Prostate gland (tissue), 2 donors: ENCODE measurements at regions of chr9 and their contacts with region 1.

Region 1: DNA sequence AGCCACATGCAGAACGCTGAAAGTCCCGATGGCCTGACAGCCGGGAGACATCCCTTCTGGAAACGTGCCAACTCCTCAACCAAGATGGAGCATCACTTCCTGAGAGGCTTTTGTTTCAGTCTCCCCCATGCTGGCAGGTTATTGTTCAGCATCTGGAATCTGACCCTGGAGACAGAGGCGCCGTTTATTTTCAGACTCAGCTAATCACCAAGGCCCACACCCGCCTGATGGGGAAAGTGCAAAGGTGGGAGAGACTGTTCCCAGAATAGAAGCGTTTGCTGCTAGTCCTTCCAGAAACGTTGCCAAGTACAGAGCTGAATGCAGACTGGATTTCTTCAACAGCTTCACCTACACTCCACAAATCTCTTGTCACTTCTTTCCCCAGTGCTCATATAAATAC is 41.8 kb upstream of the S1PR3 start:
- DNase-seq: no peak
- H3K4me3 ChIP-seq: no peak overlapping the region
- H3K27ac ChIP-seq: no peak overlapping the region
- H3K4me1 ChIP-seq: no peaks in the 10 kb centered on the region
- H3K27me3 ChIP-seq: no peaks in the 10 kb centered on the region
- CTCF ChIP-seq: no peak
- POLR2A ChIP-seq: no peak

Region 2: GRCh38 chr9:88829276-88829675 is 120.1 kb before region 1 on chr9:
- intact Hi-C with region 1: loop called (anchors 5 kb)
- DNase-seq: no peak
- H3K4me3 ChIP-seq: no peak overlapping the region
- H3K27ac ChIP-seq: no peak overlapping the region
- H3K4me1 ChIP-seq: no peaks in the 10 kb centered on the region
- H3K27me3 ChIP-seq: no peaks in the 10 kb centered on the region
- CTCF ChIP-seq: no peak
- POLR2A ChIP-seq: no peak

Region 3: GRCh38 chr9:89015340-89015739 is 65.9 kb after region 1 on chr9:
- intact Hi-C with region 1: no loop called
- DNase-seq: no peak
- H3K4me3 ChIP-seq: no peak overlapping the region
- H3K27ac ChIP-seq: no peak overlapping the region
- H3K4me1 ChIP-seq: no peaks in the 10 kb centered on the region
- H3K27me3 ChIP-seq: no peaks in the 10 kb centered on the region
- CTCF ChIP-seq: no peak
- POLR2A ChIP-seq: no peak